ENCODE measurements at regions of chr11 and their contacts with region 1.

Region 1: DNA sequence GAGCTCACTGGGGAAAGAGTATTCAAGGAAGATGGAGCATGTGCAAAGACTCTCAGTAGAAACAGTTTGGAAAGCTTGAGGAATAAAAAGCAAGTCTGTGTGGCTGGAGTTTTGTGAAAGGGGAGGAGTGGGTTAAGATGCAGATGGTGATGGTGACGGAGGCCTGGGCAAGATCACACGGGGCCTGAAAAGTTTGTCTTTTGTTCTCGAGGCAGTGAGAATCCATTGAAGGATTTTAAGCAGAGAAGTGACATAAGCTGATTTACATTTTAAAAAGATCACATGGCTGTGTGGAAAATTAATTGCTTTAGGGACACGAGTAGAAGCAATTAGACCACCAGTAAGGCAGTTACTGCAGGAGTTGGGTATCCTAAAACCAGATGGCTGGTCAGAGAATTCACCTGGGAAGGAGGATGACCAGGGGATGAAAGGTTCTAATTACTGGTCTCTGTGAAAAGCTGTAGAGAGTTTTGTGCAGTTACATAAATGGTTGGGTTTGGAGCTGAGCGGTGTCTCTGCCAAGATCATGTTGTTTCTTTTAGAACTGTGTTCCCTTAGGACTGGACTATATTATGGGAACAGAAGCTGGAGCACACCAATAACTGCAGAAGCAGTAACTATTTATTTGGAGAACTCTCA is 7.1 kb downstream of the RRP8 start:
- DNase-seq: no peak
- ATAC-seq: no peak
- H3K4me3 ChIP-seq: no peak overlapping the region
- H3K27ac ChIP-seq: no peak overlapping the region
- H3K4me1 ChIP-seq: peaks cover 9% of the 10 kb centered on the region
- H3K27me3 ChIP-seq: no peaks in the 10 kb centered on the region
- CTCF ChIP-seq: no peak
- POLR2A ChIP-seq: no peak

Region 2: DNA sequence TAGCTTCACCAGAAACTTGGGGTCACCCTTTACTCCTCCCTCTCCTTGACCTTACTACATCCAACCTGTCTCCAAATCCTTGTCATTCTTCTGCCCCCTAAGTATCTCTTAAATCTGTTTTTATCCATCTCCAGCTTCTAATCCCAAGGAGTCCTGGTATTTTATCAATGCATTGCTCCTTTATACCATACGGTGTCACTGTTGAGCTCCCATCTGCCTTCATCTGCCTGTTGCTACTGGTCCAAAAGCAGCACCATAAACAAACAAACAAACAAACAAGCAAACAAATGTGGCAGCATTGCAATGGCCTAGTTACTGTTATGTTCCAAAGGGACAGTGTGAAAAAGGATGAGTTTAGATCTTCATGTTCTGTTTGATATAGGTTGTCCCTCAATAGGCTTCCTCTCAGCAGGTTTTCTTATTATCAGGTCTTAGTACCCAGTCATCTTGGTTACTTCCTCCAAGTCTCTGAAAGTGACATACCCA is 65.0 kb before region 1 on chr11:
- intact Hi-C with region 1: loop called (anchors 10 kb)
- DNase-seq: peak in 1 of 4 donors; percentile 20
- ATAC-seq: peak; percentile 65
- H3K4me3 ChIP-seq: no peak overlapping the region
- H3K27ac ChIP-seq: no peak overlapping the region
- H3K4me1 ChIP-seq: no peaks in the 10 kb centered on the region
- H3K27me3 ChIP-seq: no peaks in the 10 kb centered on the region
- CTCF ChIP-seq: peak in 6 of 7 experiments; percentile 52 to 91 (median 76)
- POLR2A ChIP-seq: no peak